Heart left ventricle (tissue), 16 donors: ENCODE measurements at regions of chr5 and their contacts with region 1.

Region 1: GRCh38 chr5:139633295-139634027 is 14.7 kb upstream of the CXXC5 start:
- DNase-seq: peak in 3 of 5 donors; percentile 70 to 81 (median 71)
- ATAC-seq: peak; percentile 9 to 30 (median 28)
- H3K4me3 ChIP-seq: no peak overlapping the region
- H3K27ac ChIP-seq: no peak overlapping the region
- H3K4me1 ChIP-seq: peaks cover 12 to 39% (median 28%) of the 10 kb centered on the region in 12 donors
- H3K27me3 ChIP-seq: no peaks in the 10 kb centered on the region
- CTCF ChIP-seq: peak; percentile 92 to 98 (median 97)
- POLR2A ChIP-seq: no peak

Region 2: GRCh38 chr5:139422307-139422893 is 211.1 kb before region 1 on chr5:
- intact Hi-C with region 1: loop called in 1 of 10 experiments (anchors 5 kb)
- DNase-seq: no peak
- ATAC-seq: peak in 2 of 4 donors; percentile 29 to 40
- H3K4me3 ChIP-seq: no peak overlapping the region
- H3K27ac ChIP-seq: no peak overlapping the region
- H3K4me1 ChIP-seq: peaks cover 6 to 39% (median 27%) of the 10 kb centered on the region in 12 donors
- H3K27me3 ChIP-seq: no peaks in the 10 kb centered on the region
- CTCF ChIP-seq: peak; percentile 67 to 94 (median 82)
- POLR2A ChIP-seq: no peak

Region 3: DNA sequence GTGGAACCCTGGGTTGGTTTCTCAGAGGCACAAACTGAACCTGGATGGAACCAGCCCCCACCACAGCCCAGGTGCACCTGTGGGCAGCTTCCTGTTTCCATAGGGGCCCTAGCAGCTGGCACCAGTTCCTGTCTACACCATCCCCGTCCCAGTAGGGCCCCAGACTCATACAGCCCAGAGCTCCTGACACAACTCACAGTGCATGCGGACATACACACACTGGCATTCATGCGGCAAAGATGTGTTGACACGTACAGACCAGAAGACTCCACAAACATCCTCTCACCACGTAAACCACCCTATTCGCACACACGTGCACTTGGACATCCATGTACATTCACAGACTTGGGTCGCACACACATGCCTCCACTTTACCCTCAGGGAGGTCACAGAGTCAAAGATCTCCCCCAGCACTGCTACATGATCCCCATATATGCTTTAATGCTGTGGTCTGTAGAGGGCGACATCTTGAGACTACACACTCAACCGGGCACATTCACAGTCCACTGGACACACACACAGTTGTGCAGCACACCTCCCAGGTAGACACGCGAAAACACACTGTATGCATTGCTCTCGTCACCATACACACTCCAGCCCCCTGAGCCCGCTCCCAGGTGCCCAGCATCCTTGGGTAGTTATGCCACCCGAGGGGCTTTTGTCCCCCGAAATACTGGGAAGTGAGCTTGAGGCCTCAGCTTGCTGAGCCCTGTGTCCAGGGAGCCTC is 37.1 kb after region 1 on chr5:
- intact Hi-C with region 1: loop called in 1 of 10 experiments (anchors 2 kb)
- DNase-seq: peak in 1 of 5 donors; percentile 29
- ATAC-seq: peak in 3 of 4 donors; percentile 9 to 33 (median 27)
- H3K4me3 ChIP-seq: peak overlapping the region in 9 of 12 donors; percentile 49 to 67 (median 61)
- H3K27ac ChIP-seq: peak overlapping the region; percentile 93 to 98 (median 95)
- H3K4me1 ChIP-seq: peaks cover 18 to 100% (median 91%) of the 10 kb centered on the region in 12 donors
- H3K27me3 ChIP-seq: no peaks in the 10 kb centered on the region
- CTCF ChIP-seq: peak in 6 of 12 donors; percentile 22 to 47 (median 28)
- POLR2A ChIP-seq: no peak

Region 4: DNA sequence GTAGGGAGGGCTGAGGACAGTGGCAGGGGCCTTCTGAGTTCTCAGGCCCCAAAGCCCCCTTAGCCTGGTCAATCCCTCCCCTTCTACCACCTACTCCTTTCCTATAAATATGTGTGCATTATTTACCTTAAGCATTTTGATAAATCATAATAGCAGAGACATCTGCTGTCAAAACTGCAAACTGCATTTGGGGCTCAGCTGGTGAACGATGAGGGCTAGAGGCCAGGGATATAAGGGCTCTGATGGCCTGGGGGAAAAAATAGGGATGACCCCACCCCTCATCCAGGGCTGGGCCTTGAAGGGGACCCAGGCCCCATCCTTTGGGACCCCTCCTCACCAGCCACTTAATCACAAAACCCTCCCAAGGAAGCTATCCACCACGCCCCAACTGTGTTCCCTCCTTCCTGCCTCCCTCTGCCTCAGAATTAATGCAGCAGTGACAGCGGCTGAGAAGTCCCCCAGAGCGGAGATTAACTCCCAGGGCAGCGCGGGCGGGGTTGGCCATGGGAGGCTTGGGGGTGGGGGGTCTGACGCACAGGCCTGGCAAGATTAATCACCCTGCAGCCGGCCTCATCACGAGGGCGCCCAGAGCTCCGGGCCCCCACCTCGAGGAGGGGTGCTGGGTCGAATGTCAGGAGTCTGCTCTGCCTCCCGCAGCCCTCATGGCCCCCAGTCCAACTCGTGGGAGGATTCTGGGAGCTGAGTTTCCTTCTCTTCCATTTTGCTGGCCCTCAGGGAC is 56.8 kb after region 1 on chr5:
- intact Hi-C with region 1: loop called (anchors 1 to 5 kb)
- DNase-seq: peak in 2 of 5 donors; percentile 49 to 56
- ATAC-seq: peak in 3 of 4 donors; percentile 1 to 40 (median 18)
- H3K4me3 ChIP-seq: no peak overlapping the region
- H3K27ac ChIP-seq: peak overlapping the region in 8 of 12 donors; percentile 16 to 64 (median 31)
- H3K4me1 ChIP-seq: peaks cover 0 to 76% (median 42%) of the 10 kb centered on the region in 12 donors
- H3K27me3 ChIP-seq: no peaks in the 10 kb centered on the region
- CTCF ChIP-seq: peak; percentile 13 to 74 (median 62)
- POLR2A ChIP-seq: no peak

Region 5: DNA sequence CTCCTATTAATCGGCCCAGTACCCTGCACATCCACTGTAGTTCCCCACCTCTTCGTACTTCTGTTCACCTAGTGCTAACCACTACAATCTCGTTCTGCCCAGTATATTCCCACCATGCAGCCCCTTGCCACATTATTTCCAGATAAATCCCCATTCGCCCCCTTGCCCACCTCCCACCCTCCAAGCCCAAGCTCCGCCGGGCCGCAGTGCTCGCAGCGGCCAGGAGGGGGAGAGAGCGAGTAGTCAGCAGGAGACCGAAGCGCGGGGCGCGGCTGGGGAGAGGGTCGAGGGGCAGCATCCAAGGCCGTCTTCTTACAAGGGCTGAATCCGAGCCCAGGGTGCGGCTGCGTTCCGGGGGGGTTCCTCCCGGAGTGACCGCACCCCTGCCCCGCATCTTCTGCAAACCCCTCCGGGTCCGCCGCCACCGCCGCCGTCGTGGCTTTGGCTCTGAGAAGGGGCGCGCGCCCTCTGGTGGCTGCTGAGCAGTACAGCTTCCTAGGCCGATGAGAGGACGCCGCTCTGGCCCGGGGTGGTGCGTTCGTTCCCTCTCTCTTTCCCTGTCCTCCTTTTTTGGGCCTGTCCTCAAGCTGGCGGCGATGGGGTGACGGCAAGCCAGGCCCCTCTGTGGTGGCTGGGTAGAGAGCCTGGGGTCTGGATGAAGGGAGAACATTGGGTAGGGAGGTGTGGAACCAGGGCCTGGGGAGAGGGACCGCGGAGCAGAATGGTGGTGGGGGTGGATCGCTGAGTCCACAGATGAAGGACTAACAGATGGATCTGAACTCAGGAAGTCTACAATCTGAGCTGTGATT is 132.2 kb after region 1 on chr5:
- intact Hi-C with region 1: loop called (anchors 1 to 2 kb)
- DNase-seq: peak; percentile 81 to 90 (median 82)
- ATAC-seq: peak; percentile 81 to 89 (median 85)
- H3K4me3 ChIP-seq: peak overlapping the region; percentile 32 to 74 (median 57)
- H3K27ac ChIP-seq: peak overlapping the region in 3 of 12 donors; percentile 24 to 52 (median 35)
- H3K4me1 ChIP-seq: peaks cover 0 to 33% (median 12%) of the 10 kb centered on the region in 12 donors
- H3K27me3 ChIP-seq: peaks cover 0 to 26% (median 19%) of the 10 kb centered on the region in 9 donors
- CTCF ChIP-seq: peak in 11 of 12 donors; percentile 93 to 100 (median 99)
- POLR2A ChIP-seq: peak in 1 of 2 donors; percentile 32

Region 6: DNA sequence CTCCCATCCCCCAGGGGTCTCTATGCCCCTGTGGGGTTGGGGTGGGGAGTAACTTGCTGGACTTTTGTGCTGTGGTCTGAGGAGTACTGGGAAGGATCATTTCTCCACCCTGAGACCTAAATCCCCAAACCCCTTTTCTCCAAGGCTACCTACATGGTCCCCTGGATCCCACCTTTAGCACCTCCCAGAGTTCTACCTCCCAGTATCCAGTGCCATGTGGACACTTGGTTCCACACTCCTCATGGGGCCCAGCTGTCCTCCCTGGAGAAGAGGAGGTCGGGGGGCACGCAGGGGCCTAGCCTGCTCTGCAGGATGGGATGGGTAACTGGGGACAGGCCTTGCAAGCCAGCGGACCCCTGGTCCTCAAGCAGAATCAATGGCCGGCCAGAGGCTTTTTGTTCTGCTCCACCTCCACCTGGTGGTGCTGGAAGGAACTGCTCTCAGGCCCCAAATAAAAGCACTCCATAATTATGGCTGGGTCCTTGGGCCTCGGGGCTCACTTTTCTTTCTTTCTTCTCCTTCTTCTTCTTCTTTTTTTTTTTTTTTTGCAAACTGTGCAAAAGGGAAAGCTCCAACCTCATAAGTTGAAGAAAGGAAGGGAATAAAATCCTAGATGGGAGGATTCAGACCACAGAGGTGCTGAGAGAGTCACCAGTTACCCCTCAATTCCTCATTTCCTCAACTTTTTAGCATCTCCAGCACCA is 230.5 kb after region 1 on chr5:
- intact Hi-C with region 1: loop called in 1 of 10 experiments (anchors 10 kb)
- DNase-seq: peak; percentile 51 to 73 (median 67)
- ATAC-seq: peak; percentile 37 to 79 (median 64)
- H3K4me3 ChIP-seq: no peak overlapping the region
- H3K27ac ChIP-seq: peak overlapping the region in 3 of 12 donors; percentile 12 to 34 (median 30)
- H3K4me1 ChIP-seq: peaks cover 0 to 16% (median 11%) of the 10 kb centered on the region in 12 donors
- H3K27me3 ChIP-seq: no peaks in the 10 kb centered on the region
- CTCF ChIP-seq: peak; percentile 73 to 94 (median 89)
- POLR2A ChIP-seq: no peak